Psoas muscle (tissue), 8 donors: ENCODE measurements at regions of chr19 and their contacts with region 1.

Region 1: DNA sequence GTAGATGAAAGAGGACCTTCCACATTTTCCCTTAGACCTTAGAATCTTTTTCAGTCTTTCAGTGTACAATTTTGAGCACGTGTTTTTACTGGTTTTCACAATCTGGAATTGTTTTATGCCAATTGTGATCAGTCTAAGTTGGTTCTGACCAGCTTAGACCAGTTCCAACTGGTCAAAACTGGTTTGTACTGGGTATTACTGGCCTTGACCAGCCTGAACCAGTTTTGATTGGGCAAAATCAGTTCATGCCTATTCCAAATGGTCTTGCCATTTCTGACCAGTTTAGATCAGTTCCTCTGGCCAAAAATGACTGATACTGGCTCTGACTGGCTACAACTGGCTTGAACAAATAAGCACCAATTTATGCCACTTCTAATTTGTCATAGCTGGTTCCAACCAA is 36.4 kb downstream of the ZNF585A start:
- DNase-seq: no peak
- ATAC-seq: no peak
- H3K4me3 ChIP-seq: no peak overlapping the region
- H3K27ac ChIP-seq: no peak overlapping the region
- H3K4me1 ChIP-seq: no peaks in the 10 kb centered on the region
- H3K27me3 ChIP-seq: no peaks in the 10 kb centered on the region
- CTCF ChIP-seq: no peak

Region 2: DNA sequence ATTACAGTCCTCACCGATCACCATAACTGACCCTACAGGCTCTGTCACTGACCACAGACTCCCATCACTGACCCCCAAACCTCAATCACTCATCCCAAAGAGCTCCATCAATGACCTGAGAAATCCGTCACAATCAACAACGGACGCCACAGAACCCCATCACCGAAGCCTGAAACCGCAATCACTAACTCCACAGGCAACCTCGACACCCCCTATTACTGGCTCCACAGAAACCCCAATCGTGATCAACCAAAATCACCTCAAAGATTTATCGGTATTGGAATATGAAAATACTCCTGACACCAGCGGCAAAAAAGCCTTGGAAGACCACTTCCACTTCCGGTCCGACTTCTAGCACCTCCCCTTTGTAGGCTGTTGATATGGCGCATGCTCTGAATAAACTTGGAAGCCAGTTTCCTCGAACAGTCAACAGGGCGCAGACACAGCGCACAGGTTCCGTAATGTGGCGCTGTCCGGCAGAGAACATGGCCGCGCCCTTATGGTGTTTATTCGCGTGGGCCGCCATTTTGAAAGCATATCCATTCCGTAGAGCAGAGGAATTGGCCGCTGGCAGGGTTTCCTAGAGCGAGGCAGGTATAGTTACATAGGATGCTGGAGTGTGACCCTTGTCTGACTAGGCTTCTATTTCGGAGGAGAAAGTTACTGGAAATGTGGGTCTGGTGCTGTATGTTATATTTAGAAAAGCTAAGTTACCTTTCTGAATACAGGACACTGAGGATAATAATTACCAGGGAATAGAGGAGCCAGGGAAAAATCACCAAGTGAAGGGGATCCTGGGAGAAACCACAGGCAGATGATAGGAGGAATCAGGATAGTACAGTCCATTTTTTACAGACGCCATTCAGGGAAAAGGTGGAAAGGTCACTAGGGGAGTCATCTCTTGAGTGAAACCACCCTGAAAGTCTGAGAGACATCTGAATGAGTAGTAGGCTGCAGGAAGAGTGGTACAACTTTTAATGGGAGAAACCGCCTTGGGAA is 36.6 kb after region 1 on chr19 and contains the start of gene ZNF585A:
- intact Hi-C with region 1: loop called in 1 of 2 experiments (anchors 2 kb)
- DNase-seq: peak; percentile 91 to 96
- ATAC-seq: peak; percentile 99 to 100 (median 100)
- H3K4me3 ChIP-seq: peak within 1 kb of the TSS; percentile 77
- H3K27ac ChIP-seq: peak within 1 kb of the TSS; percentile 87
- H3K4me1 ChIP-seq: no peaks in the 10 kb centered on the region
- H3K27me3 ChIP-seq: no peaks in the 10 kb centered on the region
- CTCF ChIP-seq: peak; percentile 24
- total RNA-seq, gene ZNF585A: 6.9 to 9.6 (median 7.8) TPM